Activated B cell treated with CpG ODN at 0.5 μM for 24 hours (primary cell): ENCODE measurements at regions of chr10 and their contacts with region 1.

Region 1: GRCh38 chr10:931416-932318 is at the start of gene LARP4B:
- DNase-seq: peak; percentile 99
- ATAC-seq: peak; percentile 96
- H3K4me3 Mint-ChIP-seq: peak within 1 kb of the TSS; percentile 89
- H3K27ac Mint-ChIP-seq: peak within 1 kb of the TSS; percentile 87
- H3K4me1 Mint-ChIP-seq: peaks cover 48% of the 10 kb centered on the region
- H3K27me3 Mint-ChIP-seq: peaks cover 5% of the 10 kb centered on the region
- CTCF ChIP-seq: no peak
- total RNA-seq, gene LARP4B: 98.2 and 103 TPM in 2 replicates

Region 2: DNA sequence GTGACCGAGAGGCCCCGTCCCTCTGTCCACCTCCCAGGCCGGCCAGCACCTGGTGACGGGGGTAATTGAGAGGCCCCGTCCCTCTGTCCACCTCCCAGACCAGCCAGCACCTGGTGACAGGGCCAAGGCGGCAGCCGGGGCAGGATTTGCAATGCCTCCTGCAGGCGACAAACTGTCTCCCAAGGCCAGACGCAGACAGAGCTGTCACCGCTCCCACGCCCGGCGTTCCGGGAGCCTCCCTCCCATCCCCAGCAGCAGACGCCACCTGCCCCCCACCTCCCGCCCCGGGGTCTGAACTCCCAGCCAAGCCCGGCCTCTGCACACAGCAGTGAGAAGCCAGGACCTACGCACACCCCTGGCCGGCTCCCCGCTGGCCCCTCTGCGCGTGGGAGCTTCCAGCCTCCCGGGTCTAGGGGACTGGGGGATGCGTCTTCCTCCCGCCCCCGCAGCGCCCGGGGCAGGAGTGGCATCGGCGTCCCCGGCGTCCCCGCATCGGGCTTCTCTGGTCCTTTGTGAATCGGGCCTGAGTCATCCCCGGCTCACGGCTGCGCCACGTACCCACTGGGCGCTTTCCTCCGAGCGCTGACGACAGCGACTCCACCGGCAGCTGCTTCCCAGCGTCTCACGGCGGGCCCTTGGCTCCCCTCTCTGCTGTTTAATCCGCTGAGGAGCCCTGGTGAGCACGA is 147.1 kb before region 1 on chr10:
- CTCF ChIA-PET with region 1: no interaction called
- POLR2A ChIA-PET with region 1: no interaction called
- intact Hi-C with region 1: no loop called
- DNase-seq: peak; percentile 16
- ATAC-seq: no peak
- H3K4me3 Mint-ChIP-seq: no peak overlapping the region
- H3K27ac Mint-ChIP-seq: no peak overlapping the region
- H3K4me1 Mint-ChIP-seq: peaks cover 10% of the 10 kb centered on the region
- H3K27me3 Mint-ChIP-seq: peaks cover 42% of the 10 kb centered on the region
- CTCF ChIP-seq: no peak

Region 3: DNA sequence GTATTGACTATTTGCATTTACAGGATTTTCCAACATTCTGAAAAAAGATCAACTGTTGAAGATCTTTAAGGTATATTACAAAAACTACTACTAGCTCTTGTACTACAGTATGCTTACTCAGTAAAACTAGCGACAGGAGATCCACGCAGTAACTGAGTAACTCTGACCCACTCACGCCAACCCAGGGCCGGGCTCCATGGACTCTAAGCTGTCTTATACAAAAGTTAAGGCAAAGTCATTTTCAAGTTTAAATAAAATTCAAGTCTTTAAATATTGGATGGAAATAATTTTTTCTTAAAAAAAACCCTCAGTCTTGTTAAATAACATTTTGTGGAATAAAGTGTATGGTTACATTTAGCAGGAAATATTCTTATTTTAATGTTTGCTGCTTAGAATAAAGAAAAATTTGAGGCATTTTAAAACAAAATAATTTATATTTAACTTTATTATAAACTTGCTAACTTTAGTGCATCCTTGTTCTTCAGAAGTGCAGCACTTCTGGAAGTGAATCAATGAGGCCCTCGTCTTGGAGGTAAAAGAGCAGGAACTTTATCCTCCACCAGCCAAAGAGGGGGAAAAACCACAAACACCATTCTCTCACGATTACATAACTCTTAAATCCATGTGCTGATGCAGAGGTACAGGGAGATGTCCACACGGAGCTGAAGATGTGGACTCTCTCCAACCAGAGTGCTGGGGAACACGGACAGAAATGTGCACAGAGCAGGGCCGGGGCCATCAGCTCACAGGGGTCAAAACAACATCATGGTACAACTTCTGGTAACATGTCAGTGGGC is 120.1 kb before region 1 on chr10:
- CTCF ChIA-PET with region 1: no interaction called
- POLR2A ChIA-PET with region 1: no interaction called
- intact Hi-C with region 1: no loop called
- DNase-seq: no peak
- ATAC-seq: no peak
- H3K4me3 Mint-ChIP-seq: no peak overlapping the region
- H3K27ac Mint-ChIP-seq: no peak overlapping the region
- H3K4me1 Mint-ChIP-seq: no peaks in the 10 kb centered on the region
- H3K27me3 Mint-ChIP-seq: no peaks in the 10 kb centered on the region
- CTCF ChIP-seq: no peak

Region 4: GRCh38 chr10:851901-852300 is 79.8 kb before region 1 on chr10:
- CTCF ChIA-PET with region 1: interaction called, 3 read pairs
- POLR2A ChIA-PET with region 1: no interaction called
- intact Hi-C with region 1: loop called (anchors 2 kb)
- DNase-seq: peak; percentile 18
- ATAC-seq: peak; percentile 88
- H3K4me3 Mint-ChIP-seq: peak overlapping the region; percentile 62
- H3K27ac Mint-ChIP-seq: peak overlapping the region; percentile 73
- H3K4me1 Mint-ChIP-seq: peaks cover 70% of the 10 kb centered on the region
- H3K27me3 Mint-ChIP-seq: no peaks in the 10 kb centered on the region
- CTCF ChIP-seq: no peak

Region 5: DNA sequence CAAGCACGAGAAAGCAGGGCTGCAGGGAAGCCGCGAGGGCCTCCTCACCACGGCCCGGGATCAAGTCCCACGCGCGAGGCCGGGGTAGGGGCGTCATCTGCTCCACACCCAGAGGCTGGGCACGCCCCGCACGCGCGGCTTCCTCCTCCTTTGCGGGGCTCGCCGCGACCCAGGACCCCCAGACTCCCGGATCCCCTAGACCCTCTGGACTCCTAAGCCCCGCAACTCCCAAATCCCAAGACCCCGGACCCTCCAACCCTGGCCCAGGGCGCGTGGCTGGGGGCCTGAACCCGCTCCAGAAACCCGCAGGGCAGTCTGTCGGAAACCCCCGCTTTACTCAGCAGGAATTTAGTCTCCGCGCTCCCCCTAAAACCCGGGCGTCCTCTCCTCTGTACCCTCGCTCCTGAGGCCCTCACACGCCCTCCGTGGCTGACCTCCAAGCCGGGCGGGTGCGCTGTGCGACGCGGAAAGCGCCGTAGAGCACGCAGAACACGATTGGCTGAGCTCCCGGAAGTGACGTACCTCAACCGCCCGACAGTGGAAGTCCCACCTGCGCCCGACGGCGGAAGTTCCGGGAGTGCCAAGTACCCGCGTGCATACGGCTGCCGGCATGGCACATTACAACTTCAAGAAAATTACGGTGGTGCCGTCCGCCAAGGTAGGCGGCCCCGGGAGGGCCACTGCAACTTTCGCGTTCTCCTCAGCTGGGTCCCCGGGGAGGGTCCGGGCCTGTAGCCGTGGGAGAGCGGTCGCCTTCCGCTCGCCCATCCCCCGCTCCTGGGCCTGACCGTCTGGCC is 56.4 kb after region 1 on chr10 and contains the start of gene GTPBP4:
- CTCF ChIA-PET with region 1: no interaction called
- POLR2A ChIA-PET with region 1: interaction called, 20 read pairs
- intact Hi-C with region 1: loop called (anchors 1 kb)
- DNase-seq: peak; percentile 88
- ATAC-seq: peak; percentile 97
- H3K4me3 Mint-ChIP-seq: peak within 1 kb of the TSS; percentile 92
- H3K27ac Mint-ChIP-seq: peak within 1 kb of the TSS; percentile 92
- H3K4me1 Mint-ChIP-seq: peaks cover 49% of the 10 kb centered on the region
- H3K27me3 Mint-ChIP-seq: no peaks in the 10 kb centered on the region
- CTCF ChIP-seq: no peak
- total RNA-seq, gene GTPBP4: 68.0 and 73.8 TPM in 2 replicates

Region 6: DNA sequence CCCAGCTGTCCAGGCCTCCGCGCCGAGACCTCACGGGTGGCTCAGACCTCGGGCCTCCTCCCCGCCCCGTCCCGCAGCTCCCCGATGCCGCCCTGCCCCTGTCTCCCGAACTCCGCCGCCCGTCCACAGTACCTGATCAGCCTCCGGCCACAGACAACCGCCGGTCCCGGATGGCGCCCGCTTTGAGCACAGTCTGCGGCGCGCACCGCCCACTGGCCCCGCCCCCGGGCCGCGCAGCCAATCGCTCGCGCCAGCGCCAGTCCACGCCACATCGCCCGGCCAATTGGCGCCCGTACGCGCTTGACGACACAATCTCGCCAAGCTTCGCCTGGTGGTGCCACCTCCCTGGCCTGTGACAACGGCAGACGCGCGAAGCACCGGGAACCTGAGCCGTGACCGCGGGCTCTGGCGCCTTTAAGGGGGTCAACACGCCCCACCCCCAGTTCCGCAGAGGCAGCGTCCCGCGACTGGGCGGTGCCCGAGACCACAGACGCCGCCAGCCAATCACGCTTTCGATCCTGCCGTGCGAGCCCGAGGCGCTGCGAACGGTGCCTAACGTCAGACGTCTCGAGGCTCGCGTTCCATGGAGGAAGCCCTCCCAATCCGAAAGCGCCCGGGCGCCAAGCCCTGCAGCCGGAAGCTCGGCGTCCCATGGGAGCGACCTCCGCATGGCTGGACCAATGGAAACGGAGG is 117.2 kb after region 1 on chr10 and contains the start of gene IDI1:
- CTCF ChIA-PET with region 1: interaction called, 3 read pairs
- POLR2A ChIA-PET with region 1: interaction called, 45 read pairs
- intact Hi-C with region 1: loop called (anchors 1 kb)
- DNase-seq: peak; percentile 96
- ATAC-seq: peak; percentile 77
- H3K4me3 Mint-ChIP-seq: peak within 1 kb of the TSS; percentile 94
- H3K27ac Mint-ChIP-seq: peak within 1 kb of the TSS; percentile 98
- H3K4me1 Mint-ChIP-seq: peaks cover 71% of the 10 kb centered on the region
- H3K27me3 Mint-ChIP-seq: no peaks in the 10 kb centered on the region
- CTCF ChIP-seq: no peak
- total RNA-seq, gene IDI1: 75.8 and 79.8 TPM in 2 replicates